ENCODE measurements at regions of chr2 and their contacts with region 1.

Region 1: GRCh38 chr2:111120253-111121027 is at the start of gene BCL2L11:
- DNase-seq: peak; percentile 93
- H3K4me3 Mint-ChIP-seq: peak within 1 kb of the TSS; percentile 97
- H3K27ac Mint-ChIP-seq: peak within 1 kb of the TSS; percentile 97
- H3K4me1 Mint-ChIP-seq: peaks cover 51% of the 10 kb centered on the region
- H3K27me3 Mint-ChIP-seq: peaks cover 4% of the 10 kb centered on the region
- total RNA-seq, gene BCL2L11: 335 and 347 TPM in 2 replicates

Region 2: GRCh38 chr2:110748489-110748867 is 372.0 kb before region 1 on chr2:
- intact Hi-C with region 1: loop called (anchors 2 kb)
- DNase-seq: peak; percentile 78
- H3K4me3 Mint-ChIP-seq: peak overlapping the region; percentile 50
- H3K27ac Mint-ChIP-seq: peak overlapping the region; percentile 35
- H3K4me1 Mint-ChIP-seq: peaks cover 47% of the 10 kb centered on the region
- H3K27me3 Mint-ChIP-seq: peaks cover 19% of the 10 kb centered on the region

Region 3: GRCh38 chr2:110853507-110853906 is 266.9 kb before region 1 on chr2:
- intact Hi-C with region 1: loop called (anchors 1 kb)
- DNase-seq: peak; percentile 44
- H3K4me3 Mint-ChIP-seq: peak overlapping the region; percentile 35
- H3K27ac Mint-ChIP-seq: no peak overlapping the region
- H3K4me1 Mint-ChIP-seq: peaks cover 88% of the 10 kb centered on the region
- H3K27me3 Mint-ChIP-seq: peaks cover 23% of the 10 kb centered on the region

Region 4: GRCh38 chr2:111054791-111055691 is 65.4 kb before region 1 on chr2:
- intact Hi-C with region 1: loop called (anchors 1 kb)
- DNase-seq: no peak
- H3K4me3 Mint-ChIP-seq: no peak overlapping the region
- H3K27ac Mint-ChIP-seq: peak overlapping the region; percentile 80
- H3K4me1 Mint-ChIP-seq: peaks cover 41% of the 10 kb centered on the region
- H3K27me3 Mint-ChIP-seq: peaks cover 18% of the 10 kb centered on the region

Region 5: GRCh38 chr2:111145103-111145760 is 24.8 kb after region 1 on chr2:
- intact Hi-C with region 1: loop called (anchors 2 kb)
- DNase-seq: no peak
- H3K4me3 Mint-ChIP-seq: no peak overlapping the region
- H3K27ac Mint-ChIP-seq: no peak overlapping the region
- H3K4me1 Mint-ChIP-seq: peaks cover 83% of the 10 kb centered on the region
- H3K27me3 Mint-ChIP-seq: no peaks in the 10 kb centered on the region

Region 6: DNA sequence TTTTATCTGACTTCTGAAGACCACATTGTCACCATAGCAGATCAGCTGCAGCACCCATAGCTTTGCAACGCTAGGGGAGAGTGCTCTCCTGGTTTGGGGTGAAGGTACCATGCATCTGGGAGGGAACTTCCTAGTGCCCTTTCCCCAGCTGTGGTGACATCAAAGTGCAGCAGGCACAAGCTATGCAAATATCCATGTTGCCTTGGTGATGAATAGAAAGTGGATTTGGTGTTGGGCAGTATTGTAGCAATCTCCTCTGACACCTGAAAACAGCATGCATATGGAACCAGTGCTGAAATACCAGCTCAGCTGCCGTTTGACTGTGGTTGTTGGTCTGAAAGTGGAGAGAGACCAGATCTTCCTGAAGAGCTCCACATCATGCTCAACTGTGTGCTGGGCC is 37.4 kb after region 1 on chr2:
- intact Hi-C with region 1: no loop called
- DNase-seq: no peak
- H3K4me3 Mint-ChIP-seq: no peak overlapping the region
- H3K27ac Mint-ChIP-seq: peak overlapping the region; percentile 65
- H3K4me1 Mint-ChIP-seq: peaks cover 84% of the 10 kb centered on the region
- H3K27me3 Mint-ChIP-seq: peaks cover 3% of the 10 kb centered on the region

Region 7: GRCh38 chr2:111632661-111633060 is 512.2 kb after region 1 on chr2:
- intact Hi-C with region 1: loop called (anchors 5 kb)
- DNase-seq: peak; percentile 41
- H3K4me3 Mint-ChIP-seq: peak overlapping the region; percentile 20
- H3K27ac Mint-ChIP-seq: peak overlapping the region; percentile 89
- H3K4me1 Mint-ChIP-seq: peaks cover 31% of the 10 kb centered on the region
- H3K27me3 Mint-ChIP-seq: no peaks in the 10 kb centered on the region

Measured in activated T-helper 1 cell treated with anti-CD3 and anti-CD28 coated beads, Interleukin-12 subunit alpha, Interleukin-12 subunit beta, Interleukin-2, Interleukin-4 antibody, amounts not matched to agents 30 ng/mL and 10 ng/mL and 1 ng/mL, durations not matched to agents 14 hours and 24 hours and 36 hours (primary cell).